ENCODE measurements at regions of chr6 and their contacts with region 1.

Region 1: DNA sequence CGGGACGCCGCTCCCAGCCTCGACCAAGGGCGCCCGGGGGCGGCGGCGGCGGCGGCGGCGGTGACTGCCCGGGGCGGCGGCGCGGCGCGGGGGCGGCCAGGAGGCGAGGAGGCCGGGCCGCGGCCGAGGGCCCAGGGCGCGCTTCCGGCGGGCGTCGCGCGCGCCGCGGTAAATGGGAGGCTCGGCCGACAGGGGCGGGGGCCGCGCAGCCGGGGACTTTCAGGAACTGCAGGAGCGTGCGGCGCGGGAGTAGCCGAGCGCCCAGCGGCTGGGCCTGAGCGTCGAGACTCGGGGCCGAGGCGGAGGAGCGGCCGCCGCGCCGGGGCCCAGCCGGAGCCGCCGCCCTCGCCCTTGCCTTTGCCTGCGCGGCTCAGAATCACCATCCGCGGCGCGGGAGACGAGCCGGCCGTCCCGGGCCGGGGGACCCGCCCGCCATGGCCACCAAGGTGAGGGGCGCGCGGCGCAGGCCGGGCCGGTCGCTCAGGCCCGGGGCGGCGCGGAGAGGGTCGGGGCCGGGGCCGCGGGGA is at the start of gene SNX9:
- DNase-seq: peak; percentile 92
- ATAC-seq: peak; percentile 97
- total RNA-seq, gene SNX9: 35.5 TPM

Region 2: GRCh38 chr6:157867155-157867559 is 44.1 kb after region 1 on chr6:
- intact Hi-C with region 1: loop called (anchors 5 kb)
- DNase-seq: no peak
- ATAC-seq: no peak